ENCODE measurements at regions of chr11 and their contacts with region 1.

Region 1: DNA sequence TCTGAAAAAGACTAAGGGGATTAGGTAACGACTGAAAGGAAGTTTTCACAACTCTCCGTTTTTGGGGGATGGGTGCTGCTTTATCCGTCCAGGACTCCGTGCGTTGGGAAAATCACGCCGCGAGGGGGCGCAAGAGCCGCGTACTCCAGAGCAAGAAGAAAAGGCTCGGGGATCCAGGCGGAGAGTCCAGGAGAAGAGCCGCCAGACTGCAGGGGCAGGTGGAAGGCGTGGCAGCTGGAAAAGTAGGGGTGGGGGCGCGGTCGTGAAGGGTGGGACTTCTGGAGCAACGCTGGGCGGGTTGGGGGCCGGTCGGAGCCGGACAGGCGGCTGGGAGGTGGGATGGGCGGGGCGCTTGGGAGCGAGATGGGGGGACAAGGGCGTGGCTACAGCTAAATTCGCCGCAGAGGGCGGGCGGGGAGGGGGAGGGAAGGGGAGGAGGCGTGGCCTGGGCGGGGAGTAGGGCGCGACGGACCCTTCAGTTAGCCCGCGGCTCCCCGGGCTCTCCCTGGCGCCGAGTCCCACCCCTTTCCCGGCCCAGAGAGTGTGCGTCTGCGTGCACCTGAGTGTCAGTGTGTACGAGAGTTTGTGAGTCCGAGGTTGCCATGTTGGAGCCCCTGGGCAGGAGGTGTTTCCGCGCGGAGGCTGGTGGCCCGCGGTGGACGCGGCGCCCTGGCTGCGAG is 613 bp upstream of the ARHGEF17 start:
- DNase-seq: peak; percentile 98
- H3K4me3 ChIP-seq: peak overlapping the region; percentile 77
- H3K27ac ChIP-seq: peak overlapping the region; percentile 97
- H3K27me3 ChIP-seq: no peaks in the 10 kb centered on the region
- CTCF ChIP-seq: peak; percentile 85

Region 2: DNA sequence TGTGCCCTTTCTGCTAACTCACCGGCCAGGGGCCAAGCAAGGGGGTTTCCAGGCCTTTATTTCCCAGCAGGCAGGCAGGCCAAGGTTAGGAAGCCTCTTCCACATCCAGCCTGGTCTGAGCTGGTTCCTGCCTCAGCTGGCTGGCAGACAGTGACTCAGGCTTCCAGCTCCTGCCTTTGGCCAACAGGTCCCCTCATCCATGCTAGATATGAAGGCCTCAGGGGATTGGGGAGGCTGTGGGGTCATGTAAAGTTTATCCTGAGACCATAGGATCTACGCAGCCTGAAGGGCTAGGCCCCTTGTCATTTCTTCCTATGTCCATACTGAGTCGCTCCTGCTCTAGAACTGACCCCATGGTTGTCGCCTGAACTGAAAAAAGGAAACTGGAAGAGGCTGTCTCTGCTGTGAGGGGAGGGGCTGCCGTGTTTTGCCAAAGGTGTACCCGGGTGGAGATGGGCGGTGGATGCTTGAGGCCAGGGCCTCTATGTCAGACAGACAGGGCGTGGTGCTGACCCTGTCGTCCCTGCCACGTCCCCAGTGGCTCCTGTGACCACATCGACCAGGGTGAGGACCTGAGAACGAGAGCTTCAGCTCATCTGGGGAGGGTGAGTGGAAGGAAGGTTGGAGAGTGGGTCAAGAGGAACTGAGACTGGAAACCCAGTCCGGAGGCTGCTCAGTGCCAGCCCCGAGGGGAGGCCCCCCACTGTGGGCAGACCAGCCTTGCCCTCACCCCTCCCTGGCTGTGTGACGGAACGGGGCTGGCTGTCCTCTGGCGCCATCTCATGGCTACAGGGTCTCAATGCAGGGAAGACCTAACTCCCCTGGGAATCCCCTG is 18.4 kb before region 1 on chr11:
- CTCF ChIA-PET with region 1: interaction called, 35 read pairs
- POLR2A ChIA-PET with region 1: no interaction called
- DNase-seq: no peak
- H3K4me3 ChIP-seq: no peak overlapping the region
- H3K27ac ChIP-seq: no peak overlapping the region
- H3K27me3 ChIP-seq: no peaks in the 10 kb centered on the region
- CTCF ChIP-seq: peak; percentile 99

Region 3: DNA sequence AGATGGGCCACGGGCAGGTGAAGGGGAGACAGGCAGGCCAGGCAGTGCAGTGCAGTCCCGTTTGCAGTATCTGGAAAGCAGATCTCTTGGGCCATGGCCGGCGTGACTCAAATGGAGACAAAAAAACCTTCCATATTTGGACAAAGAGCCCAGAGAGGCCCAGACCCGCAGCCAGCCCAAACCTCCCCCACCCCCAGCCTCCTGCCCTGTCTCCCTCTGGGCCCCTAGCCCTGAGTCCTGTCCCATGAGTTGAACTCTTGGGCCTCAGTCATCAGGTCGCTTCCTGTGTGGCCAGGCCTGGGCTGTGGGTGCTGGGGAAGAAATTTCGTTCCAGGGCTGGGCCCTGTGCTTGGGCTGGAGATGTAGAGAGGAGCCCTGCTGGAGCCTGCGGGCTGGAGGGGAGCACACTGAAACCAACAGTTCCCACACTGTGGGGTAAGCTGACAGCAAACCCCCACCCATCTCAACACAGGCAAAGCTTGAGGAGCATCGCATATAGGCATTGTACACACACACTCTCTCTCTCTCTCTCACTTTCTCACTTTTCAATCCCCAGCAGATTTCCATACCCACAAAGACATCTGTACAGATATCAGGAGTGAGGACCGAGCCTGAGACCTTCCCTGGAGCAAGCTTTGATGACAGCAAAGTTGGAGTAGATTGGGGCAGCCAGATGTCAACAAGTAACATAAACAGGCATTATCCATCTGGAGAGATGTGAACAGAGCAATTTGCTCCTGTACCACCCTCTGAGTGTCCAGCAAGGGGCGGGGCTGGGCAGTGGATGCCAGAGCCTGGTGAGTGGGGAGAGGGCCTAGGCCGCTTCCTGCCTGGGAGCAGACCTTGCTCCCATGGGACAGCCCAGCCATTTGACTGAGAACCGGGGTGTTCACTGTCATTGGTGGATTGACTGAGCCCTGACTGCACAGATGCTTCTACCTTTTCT is 17.8 kb after region 1 on chr11:
- CTCF ChIA-PET with region 1: interaction called, 22 read pairs
- POLR2A ChIA-PET with region 1: interaction called, 61 read pairs
- DNase-seq: no peak
- H3K4me3 ChIP-seq: no peak overlapping the region
- H3K27ac ChIP-seq: peak overlapping the region; percentile 87
- H3K27me3 ChIP-seq: no peaks in the 10 kb centered on the region
- CTCF ChIP-seq: no peak

Region 4: DNA sequence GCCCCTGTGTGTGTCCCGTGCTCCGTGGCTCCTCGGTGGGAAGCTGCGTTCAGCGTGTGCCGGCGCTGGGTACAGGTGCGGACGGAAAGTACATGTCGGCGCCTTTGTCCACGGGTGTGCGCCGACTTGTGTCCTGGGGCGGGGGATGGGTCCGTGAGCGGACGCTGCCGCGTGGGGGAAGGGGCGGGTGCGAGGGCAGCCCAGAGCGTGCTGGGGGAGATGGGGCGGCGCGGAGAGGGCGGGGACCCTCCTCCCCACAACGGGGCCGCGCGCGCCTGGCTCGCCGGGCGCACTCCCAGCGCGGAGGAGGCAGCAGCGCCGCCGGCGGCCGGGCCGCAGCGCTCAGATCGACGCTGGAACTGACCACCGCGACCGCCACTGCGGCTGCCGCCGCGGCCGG is 35.2 kb after region 1 on chr11:
- CTCF ChIA-PET with region 1: interaction called, 137 read pairs
- POLR2A ChIA-PET with region 1: interaction called, 70 read pairs
- DNase-seq: no peak
- H3K4me3 ChIP-seq: no peak overlapping the region
- H3K27ac ChIP-seq: no peak overlapping the region
- H3K27me3 ChIP-seq: no peaks in the 10 kb centered on the region
- CTCF ChIP-seq: no peak

Region 5: DNA sequence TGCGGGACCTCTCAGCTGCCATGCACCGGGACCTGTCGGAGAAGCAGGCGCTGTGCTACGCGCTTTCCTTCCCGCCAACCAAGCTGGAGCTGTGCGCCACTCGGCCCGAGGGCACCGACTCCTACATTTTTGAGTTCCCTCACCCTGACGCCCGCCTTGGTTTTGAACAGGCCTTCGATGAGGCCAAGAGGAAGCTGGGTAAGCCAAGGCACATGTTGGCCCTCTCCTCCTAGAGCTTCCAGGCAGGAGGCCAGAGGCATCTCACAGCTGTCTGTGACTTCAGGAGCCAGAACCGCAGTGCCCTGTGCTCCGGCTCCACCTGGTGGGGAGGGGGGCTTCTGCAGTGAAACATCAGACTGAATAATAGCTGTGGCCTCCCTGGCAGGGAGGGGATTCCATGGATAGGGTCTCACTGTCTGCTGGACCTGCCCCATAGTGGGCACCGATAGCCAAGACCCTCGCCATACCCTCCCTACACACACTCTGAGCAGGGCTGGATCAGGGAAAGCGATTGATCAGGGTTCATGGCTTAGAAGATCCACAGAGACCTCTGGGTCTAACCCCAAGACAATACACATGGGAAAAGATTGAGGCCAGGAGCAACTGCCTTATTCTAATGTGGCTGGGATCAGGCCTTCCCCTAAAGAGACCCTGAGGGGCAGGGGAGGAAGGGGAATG is 53.0 kb after region 1 on chr11:
- CTCF ChIA-PET with region 1: interaction called, 13 read pairs
- POLR2A ChIA-PET with region 1: interaction called, 3 read pairs
- DNase-seq: no peak
- H3K4me3 ChIP-seq: no peak overlapping the region
- H3K27ac ChIP-seq: no peak overlapping the region
- H3K27me3 ChIP-seq: no peaks in the 10 kb centered on the region
- CTCF ChIP-seq: peak; percentile 61

Region 6: DNA sequence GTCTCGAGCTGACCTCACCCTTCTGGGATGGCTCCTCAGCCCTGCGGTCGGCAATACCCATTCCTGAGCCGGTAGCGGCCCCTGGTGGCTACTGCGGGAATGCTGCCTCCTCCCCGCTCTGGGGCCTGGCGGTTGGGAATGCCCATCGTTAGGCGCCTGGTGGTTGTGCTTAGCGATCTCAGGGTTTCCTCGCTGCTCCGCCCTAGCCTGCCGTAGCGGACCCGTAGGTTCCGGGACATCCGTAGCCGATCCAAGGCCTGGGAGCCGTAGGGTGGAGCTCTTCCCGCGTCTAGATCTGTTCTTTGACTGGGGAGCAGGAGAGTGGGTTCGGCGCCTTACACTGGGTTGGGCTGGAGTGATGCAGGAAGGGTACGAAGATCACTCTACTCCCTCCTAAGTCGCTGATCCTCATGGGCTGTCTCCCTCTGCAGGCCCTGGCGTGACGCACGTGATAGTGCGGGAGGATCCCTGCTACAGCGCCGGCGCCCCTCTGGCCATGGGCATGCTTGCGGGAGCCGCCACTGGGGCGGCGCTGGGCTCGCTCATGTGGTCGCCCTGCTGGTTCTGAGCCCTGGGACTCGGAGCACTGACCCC is 353.7 kb after region 1 on chr11:
- CTCF ChIA-PET with region 1: interaction called, 12 read pairs
- POLR2A ChIA-PET with region 1: no interaction called
- DNase-seq: peak; percentile 49
- H3K4me3 ChIP-seq: peak overlapping the region; percentile 55
- H3K27ac ChIP-seq: peak overlapping the region; percentile 11
- H3K27me3 ChIP-seq: no peaks in the 10 kb centered on the region
- CTCF ChIP-seq: peak; percentile 98